ENCODE measurements at regions of chr13 and their contacts with region 1.

Region 1: DNA sequence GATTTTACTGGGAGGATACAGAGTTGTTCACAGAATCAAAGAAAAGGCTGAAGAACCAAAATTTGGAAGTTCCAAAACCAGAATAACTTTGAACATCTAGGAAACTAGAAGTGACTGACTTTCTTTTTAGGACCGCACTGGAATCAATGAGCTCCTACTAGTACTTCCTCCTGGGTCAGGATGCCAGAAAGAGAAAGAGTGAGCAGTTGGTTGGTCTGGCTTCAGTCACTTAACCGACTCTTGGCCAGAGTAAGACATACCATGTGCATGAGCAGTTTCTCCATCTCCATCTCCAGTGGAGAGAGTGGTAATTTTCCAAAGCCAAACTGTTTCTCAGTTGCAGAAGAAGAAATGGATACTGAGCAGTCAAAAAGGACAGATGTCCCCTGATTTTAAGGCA is 27.1 kb upstream of the MTUS2 start:
- DNase-seq: no peak
- H3K4me3 ChIP-seq: no peak overlapping the region
- H3K4me3 Mint-ChIP-seq: no peak overlapping the region
- H3K27ac ChIP-seq: no peak overlapping the region
- H3K27ac Mint-ChIP-seq: no peak overlapping the region
- H3K4me1 ChIP-seq: peaks cover 3 to 4% of the 10 kb centered on the region in 2 donors
- H3K4me1 Mint-ChIP-seq: peaks cover 3% of the 10 kb centered on the region
- H3K27me3 ChIP-seq: peaks cover 3 to 6% of the 10 kb centered on the region in 2 donors
- H3K27me3 Mint-ChIP-seq: peaks cover 26 to 35% (median 29%) of the 10 kb centered on the region in 3 donors
- CTCF ChIP-seq: no peak

Region 2: GRCh38 chr13:28313579-28313978 is 479.4 kb before region 1 on chr13:
- intact Hi-C with region 1: loop called in 1 of 2 experiments (anchors 2 kb)
- DNase-seq: peak in 2 of 3 donors; percentile 5 to 11
- H3K4me3 ChIP-seq: no peak overlapping the region
- H3K4me3 Mint-ChIP-seq: no peak overlapping the region
- H3K27ac ChIP-seq: no peak overlapping the region
- H3K27ac Mint-ChIP-seq: no peak overlapping the region
- H3K4me1 ChIP-seq: peaks cover 0 to 4% of the 10 kb centered on the region in 2 donors
- H3K4me1 Mint-ChIP-seq: peaks cover 11% of the 10 kb centered on the region
- H3K27me3 ChIP-seq: no peaks in the 10 kb centered on the region
- H3K27me3 Mint-ChIP-seq: peaks cover 2 to 9% (median 8%) of the 10 kb centered on the region in 3 donors
- CTCF ChIP-seq: peak; percentile 27

Region 3: DNA sequence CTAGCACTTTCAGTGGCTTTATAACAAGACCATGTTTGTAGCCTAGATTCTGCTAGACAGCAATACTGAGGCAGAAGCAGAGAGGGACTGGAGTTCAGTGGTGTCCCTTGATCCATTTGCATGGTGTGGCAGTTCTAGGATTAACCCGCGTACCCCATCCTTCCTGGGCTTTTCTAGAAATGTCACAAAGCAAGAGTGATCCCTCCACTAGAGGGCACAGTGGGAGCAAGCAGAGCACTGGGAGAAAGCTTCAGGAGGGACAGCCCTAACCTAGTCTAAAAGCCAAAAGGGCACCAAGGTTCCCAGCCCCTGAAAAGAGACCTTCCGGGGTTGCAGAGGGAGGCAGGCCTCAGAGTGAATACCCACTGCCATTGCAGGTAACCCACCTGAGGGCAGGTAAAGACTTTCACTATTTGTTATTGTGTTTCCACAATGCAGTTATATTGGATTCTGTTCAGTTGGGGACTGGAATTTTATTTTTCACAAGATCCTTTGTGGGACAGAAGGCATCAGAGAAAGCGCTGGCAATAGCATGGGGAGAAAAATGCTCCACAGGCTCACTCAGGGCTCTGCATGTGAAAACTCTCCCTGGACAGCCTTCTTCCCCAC is 468.7 kb before region 1 on chr13:
- intact Hi-C with region 1: loop called (anchors 2 to 5 kb)
- DNase-seq: peak; percentile 55 to 75 (median 64)
- H3K4me3 ChIP-seq: no peak overlapping the region
- H3K4me3 Mint-ChIP-seq: no peak overlapping the region
- H3K27ac ChIP-seq: no peak overlapping the region
- H3K27ac Mint-ChIP-seq: no peak overlapping the region
- H3K4me1 ChIP-seq: no peaks in the 10 kb centered on the region
- H3K4me1 Mint-ChIP-seq: no peaks in the 10 kb centered on the region
- H3K27me3 ChIP-seq: peaks cover 8 to 28% of the 10 kb centered on the region in 2 donors
- H3K27me3 Mint-ChIP-seq: peaks cover 15 to 46% (median 45%) of the 10 kb centered on the region in 3 donors
- CTCF ChIP-seq: peak; percentile 84

Region 4: GRCh38 chr13:28679628-28680027 is 113.4 kb before region 1 on chr13:
- intact Hi-C with region 1: loop called in 1 of 2 experiments (anchors 10 kb)
- DNase-seq: no peak
- H3K4me3 ChIP-seq: no peak overlapping the region
- H3K4me3 Mint-ChIP-seq: no peak overlapping the region
- H3K27ac ChIP-seq: no peak overlapping the region
- H3K27ac Mint-ChIP-seq: peak overlapping the region in 1 of 7 donors; percentile 41
- H3K4me1 ChIP-seq: no peaks in the 10 kb centered on the region
- H3K4me1 Mint-ChIP-seq: peaks cover 5% of the 10 kb centered on the region
- H3K27me3 ChIP-seq: no peaks in the 10 kb centered on the region
- H3K27me3 Mint-ChIP-seq: peaks cover 0 to 5% (median 1%) of the 10 kb centered on the region in 3 donors
- CTCF ChIP-seq: peak; percentile 21

Region 5: DNA sequence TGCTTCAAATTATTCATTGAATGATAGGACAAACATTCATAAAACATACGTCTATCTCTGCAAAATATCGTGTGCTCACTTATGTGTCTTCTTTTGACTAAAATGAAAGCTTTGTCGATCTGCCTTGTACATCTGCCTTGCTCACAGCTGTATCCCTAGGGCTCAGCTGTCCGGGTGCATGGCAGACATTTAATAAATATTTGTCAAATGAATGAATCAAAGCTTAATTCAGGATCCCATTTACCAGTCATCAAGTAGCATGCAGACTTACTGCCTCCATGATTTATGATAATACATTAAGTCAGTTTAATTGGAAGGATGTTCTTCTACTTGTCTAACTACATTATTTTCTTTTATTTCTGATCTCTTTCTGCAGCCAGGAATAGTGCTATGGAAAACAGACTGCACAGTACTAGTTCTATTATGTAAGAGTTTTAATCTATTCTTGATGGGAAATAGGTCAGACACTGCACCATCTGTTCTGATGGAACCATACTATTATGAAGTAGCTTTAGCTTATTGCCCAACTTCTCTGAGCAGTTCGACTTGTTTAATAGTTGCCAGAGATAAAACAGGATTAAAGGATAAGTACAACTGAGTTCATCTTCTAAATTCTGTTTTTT is 87.4 kb before region 1 on chr13:
- intact Hi-C with region 1: no loop called
- DNase-seq: no peak
- H3K4me3 ChIP-seq: no peak overlapping the region
- H3K4me3 Mint-ChIP-seq: no peak overlapping the region
- H3K27ac ChIP-seq: peak overlapping the region in 1 of 2 donors; percentile 37
- H3K27ac Mint-ChIP-seq: peak overlapping the region in 2 of 7 donors; percentile 58 to 69
- H3K4me1 ChIP-seq: peaks cover 26 to 31% of the 10 kb centered on the region in 2 donors
- H3K4me1 Mint-ChIP-seq: peaks cover 28% of the 10 kb centered on the region
- H3K27me3 ChIP-seq: no peaks in the 10 kb centered on the region
- H3K27me3 Mint-ChIP-seq: no peaks in the 10 kb centered on the region
- CTCF ChIP-seq: no peak

Region 6: DNA sequence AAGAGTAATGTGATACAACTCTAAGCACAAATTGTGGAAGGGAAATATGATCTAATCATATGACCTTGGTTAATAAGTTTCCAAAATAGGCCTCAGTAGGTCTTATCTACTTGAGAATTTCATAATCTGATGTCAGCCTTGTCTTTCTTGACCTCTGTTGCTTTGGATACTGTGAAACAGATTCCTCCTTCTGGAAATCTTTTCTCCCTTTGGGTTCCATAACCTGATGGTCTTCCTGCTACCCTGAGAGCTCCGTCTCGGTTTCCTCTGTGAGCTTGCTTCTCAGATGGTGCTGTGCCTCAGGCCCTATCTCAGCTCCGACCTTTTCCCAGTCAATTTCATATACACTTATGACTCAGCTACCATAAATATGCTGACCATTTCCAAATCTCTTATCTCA is 67.9 kb before region 1 on chr13:
- intact Hi-C with region 1: no loop called
- DNase-seq: no peak
- H3K4me3 ChIP-seq: no peak overlapping the region
- H3K4me3 Mint-ChIP-seq: no peak overlapping the region
- H3K27ac ChIP-seq: no peak overlapping the region
- H3K27ac Mint-ChIP-seq: no peak overlapping the region
- H3K4me1 ChIP-seq: no peaks in the 10 kb centered on the region
- H3K4me1 Mint-ChIP-seq: no peaks in the 10 kb centered on the region
- H3K27me3 ChIP-seq: no peaks in the 10 kb centered on the region
- H3K27me3 Mint-ChIP-seq: peaks cover 2 to 12% (median 5%) of the 10 kb centered on the region in 3 donors
- CTCF ChIP-seq: no peak